Esophagus muscularis mucosa (tissue), 4 donors: ENCODE measurements at regions of chr5 and their contacts with region 1.

Region 1: GRCh38 chr5:174418928-174419796 is 305.2 kb upstream of the MSX2 start:
- DNase-seq: peak; percentile 97
- H3K4me3 ChIP-seq: peak overlapping the region; percentile 23 to 40 (median 30)
- H3K27ac ChIP-seq: peak overlapping the region in 1 of 4 donors; percentile 34
- H3K4me1 ChIP-seq: peaks cover 6 to 14% (median 9%) of the 10 kb centered on the region in 4 donors
- H3K27me3 ChIP-seq: peaks cover 0 to 20% (median 0%) of the 10 kb centered on the region in 4 donors
- CTCF ChIP-seq: peak; percentile 79 to 94 (median 82)
- EP300 ChIP-seq: no peak
- POLR2A ChIP-seq: no peak

Region 2: GRCh38 chr5:174735498-174736330 is 316.6 kb after region 1 on chr5:
- intact Hi-C with region 1: loop called (anchors 5 kb)
- DNase-seq: no peak
- H3K4me3 ChIP-seq: peak overlapping the region in 2 of 4 donors; percentile 20 to 22
- H3K27ac ChIP-seq: no peak overlapping the region
- H3K4me1 ChIP-seq: peaks cover 6 to 22% (median 18%) of the 10 kb centered on the region in 4 donors
- H3K27me3 ChIP-seq: peaks cover 0 to 88% (median 54%) of the 10 kb centered on the region in 4 donors
- CTCF ChIP-seq: peak; percentile 34 to 37 (median 36)
- EP300 ChIP-seq: no peak
- POLR2A ChIP-seq: no peak

Region 3: DNA sequence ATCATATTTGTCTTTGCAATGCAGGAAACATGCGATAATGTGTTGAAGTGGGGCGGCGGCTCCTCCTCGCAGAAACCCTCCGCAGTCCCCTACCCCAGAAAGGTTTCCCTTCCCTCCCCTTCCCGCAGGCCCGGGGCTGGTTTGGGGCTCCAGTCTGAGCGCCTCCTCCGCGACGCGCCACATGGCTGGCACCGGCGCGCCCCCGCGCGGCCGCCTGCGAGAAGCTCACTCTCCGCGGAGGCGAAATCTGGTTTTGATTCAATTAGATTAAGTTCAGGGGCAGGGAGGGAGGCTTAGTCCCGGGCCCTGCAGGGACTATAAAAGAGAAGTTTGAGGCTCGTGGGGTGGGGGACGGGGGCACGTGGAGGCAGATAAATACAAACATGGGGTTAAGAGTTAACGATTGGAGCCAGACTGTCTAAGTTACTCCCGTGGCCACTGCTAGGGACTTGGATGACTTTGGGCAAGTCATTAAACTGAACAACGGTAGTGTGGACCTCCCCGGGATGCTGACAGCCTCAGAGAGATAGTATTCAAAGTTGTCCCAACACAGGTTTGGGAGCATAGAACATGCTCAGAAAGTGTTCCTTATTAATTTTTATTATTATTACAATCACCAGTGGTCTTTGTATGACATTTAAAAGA is 374.6 kb after region 1 on chr5:
- intact Hi-C with region 1: loop called (anchors 2 kb)
- DNase-seq: no peak
- H3K4me3 ChIP-seq: peak overlapping the region in 1 of 4 donors; percentile 12
- H3K27ac ChIP-seq: no peak overlapping the region
- H3K4me1 ChIP-seq: peaks cover 0 to 17% (median 15%) of the 10 kb centered on the region in 4 donors
- H3K27me3 ChIP-seq: peaks cover 0 to 9% (median 0%) of the 10 kb centered on the region in 4 donors
- CTCF ChIP-seq: peak; percentile 71 to 88 (median 75)
- EP300 ChIP-seq: no peak
- POLR2A ChIP-seq: no peak

Region 4: GRCh38 chr5:174935854-174936474 is 516.8 kb after region 1 on chr5:
- intact Hi-C with region 1: loop called (anchors 2 kb)
- DNase-seq: no peak
- H3K4me3 ChIP-seq: no peak overlapping the region
- H3K27ac ChIP-seq: no peak overlapping the region
- H3K4me1 ChIP-seq: peaks cover 0 to 9% (median 4%) of the 10 kb centered on the region in 4 donors
- H3K27me3 ChIP-seq: peaks cover 0 to 12% (median 0%) of the 10 kb centered on the region in 4 donors
- CTCF ChIP-seq: peak; percentile 70 to 88 (median 85)
- EP300 ChIP-seq: no peak
- POLR2A ChIP-seq: no peak